CD4-positive, alpha-beta memory T cell (primary cell): ENCODE measurements at regions of chr2 and their contacts with region 1.

Region 1: DNA sequence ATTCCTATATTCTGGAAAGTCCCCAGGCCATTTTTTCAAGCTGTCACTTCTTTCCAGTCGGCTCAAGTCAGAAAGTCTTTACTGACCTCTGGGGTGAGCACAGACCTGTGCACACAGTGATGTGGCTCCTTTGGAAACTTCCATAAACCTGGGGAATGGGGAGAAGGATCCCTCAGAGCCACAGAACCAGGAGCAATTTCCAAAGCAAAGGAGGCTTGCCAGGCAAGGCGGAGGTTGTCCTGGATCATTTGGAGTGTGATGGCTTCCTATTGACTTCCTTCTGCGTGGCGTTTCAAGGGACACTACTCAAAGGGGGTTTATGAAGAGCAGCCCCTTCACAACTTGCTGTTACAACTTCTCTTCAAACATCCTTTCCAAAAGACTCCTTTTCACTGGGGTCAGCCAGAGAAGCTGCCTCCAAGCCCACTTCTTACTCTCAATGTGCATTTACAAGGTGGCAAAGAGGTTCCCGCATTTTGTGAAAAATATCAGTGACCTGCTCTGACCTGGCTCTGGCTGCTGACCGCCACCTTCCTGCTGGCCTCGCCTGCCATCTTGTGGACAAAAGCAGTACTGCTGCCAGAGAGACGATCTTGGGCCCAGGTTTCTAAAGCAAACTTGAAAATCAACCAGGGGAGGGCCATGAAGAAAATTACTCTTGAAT is 18.2 kb upstream of the TMEM247 start:
- DNase-seq: peak; percentile 53 to 71 (median 61)
- H3K4me3 ChIP-seq: no peak overlapping the region
- H3K4me3 Mint-ChIP-seq: no peak overlapping the region
- H3K27ac ChIP-seq: no peak overlapping the region
- H3K27ac Mint-ChIP-seq: peak overlapping the region in 2 of 7 donors; percentile 51 to 81
- H3K4me1 ChIP-seq: peaks cover 7% of the 10 kb centered on the region
- H3K4me1 Mint-ChIP-seq: peaks cover 4 to 12% (median 10%) of the 10 kb centered on the region in 4 donors
- H3K27me3 ChIP-seq: no peaks in the 10 kb centered on the region
- H3K27me3 Mint-ChIP-seq: peaks cover 0 to 2% of the 10 kb centered on the region in 2 donors

Region 2: DNA sequence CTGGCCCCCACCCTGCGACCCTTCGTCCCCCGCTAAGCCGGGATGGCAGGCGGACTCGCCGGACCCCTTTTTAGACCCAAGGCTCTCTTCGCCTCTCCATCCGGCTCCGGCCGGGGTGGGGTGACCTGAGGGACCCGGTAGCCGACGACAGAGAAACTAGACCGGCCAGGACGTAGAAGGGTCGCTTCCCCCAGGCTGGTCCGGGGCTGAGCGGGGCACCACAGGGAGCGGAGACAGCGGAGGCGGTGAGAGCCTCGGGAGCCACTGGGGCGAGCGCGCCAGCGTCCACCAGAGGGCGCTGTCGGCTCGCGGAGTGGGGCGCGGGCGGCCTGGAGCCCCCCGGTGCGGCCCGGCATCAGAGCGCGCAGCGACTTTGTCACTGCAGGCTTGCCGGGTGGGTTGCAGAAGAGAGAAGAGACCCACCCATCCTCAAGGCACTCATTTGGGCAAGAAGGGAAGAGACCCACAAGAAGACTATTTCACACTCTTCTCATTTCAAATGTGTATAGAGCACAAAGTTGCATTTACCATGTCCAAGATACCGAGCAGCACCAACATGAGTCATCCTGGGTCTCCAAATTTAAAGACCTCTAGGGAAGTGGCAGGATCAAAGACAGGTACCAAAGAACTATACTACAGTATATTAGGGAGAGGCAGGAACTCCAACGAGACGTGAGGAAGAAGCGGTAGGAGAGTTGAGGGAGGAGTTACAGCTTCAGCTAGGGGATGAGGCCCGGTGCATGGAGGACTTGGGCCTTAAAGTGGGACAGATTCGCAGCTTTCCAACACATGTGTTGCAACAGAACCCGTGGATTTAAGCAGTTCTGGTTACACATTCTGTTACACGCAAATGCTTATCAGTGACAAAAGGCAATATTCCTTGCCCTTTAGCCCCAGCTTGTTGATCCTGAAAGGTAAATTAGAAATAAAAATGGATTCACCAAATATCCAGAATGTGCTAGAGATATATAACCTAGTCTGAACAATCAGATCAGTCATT is 817.3 kb before region 1 on chr2:
- CTCF ChIA-PET with region 1: no interaction called
- POLR2A ChIA-PET with region 1: no interaction called
- intact Hi-C with region 1: loop called (anchors 2 kb)
- DNase-seq: peak; percentile 47 to 76 (median 68)
- H3K4me3 ChIP-seq: peak overlapping the region in 1 of 2 donors; percentile 39
- H3K4me3 Mint-ChIP-seq: peak overlapping the region in 6 of 8 donors; percentile 12 to 69 (median 41)
- H3K27ac ChIP-seq: no peak overlapping the region
- H3K27ac Mint-ChIP-seq: peak overlapping the region in 2 of 7 donors; percentile 24 to 71
- H3K4me1 ChIP-seq: peaks cover 9% of the 10 kb centered on the region
- H3K4me1 Mint-ChIP-seq: peaks cover 0 to 8% (median 2%) of the 10 kb centered on the region in 4 donors
- H3K27me3 ChIP-seq: peaks cover 8% of the 10 kb centered on the region
- H3K27me3 Mint-ChIP-seq: peaks cover 16 to 18% of the 10 kb centered on the region in 2 donors

Region 3: DNA sequence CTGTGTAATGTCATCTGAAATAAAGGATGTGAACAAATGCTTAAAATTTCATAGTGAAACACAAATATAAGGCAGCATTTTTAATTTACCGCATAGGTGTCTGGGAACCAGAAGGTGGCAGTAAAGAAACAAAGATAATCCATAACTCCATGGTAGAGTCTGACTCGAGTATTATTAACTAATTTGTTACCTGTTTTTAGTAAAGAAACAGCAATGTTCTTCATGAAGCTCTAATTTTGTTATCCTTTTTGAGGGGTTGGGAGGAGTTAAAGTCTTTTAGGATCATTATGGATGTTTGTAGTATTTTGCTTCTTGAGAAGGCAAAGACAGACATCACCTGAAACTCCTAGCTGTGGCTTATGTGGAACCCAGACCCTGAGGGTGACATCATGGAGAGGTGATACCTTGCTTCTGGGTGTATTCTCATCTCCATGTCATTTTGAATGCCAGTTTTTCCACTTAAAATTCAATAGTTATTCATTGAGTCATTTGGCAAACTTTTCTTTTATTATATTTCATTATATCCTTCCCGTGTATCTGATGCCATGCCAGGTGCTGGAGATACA is 450.1 kb before region 1 on chr2:
- CTCF ChIA-PET with region 1: interaction called, 11 read pairs
- POLR2A ChIA-PET with region 1: no interaction called
- intact Hi-C with region 1: loop called (anchors 1 kb)
- DNase-seq: peak in 4 of 5 donors; percentile 21 to 35 (median 30)
- H3K4me3 ChIP-seq: no peak overlapping the region
- H3K4me3 Mint-ChIP-seq: no peak overlapping the region
- H3K27ac ChIP-seq: no peak overlapping the region
- H3K27ac Mint-ChIP-seq: no peak overlapping the region
- H3K4me1 ChIP-seq: no peaks in the 10 kb centered on the region
- H3K4me1 Mint-ChIP-seq: no peaks in the 10 kb centered on the region
- H3K27me3 ChIP-seq: no peaks in the 10 kb centered on the region
- H3K27me3 Mint-ChIP-seq: no peaks in the 10 kb centered on the region